ENCODE measurements at regions of chr4 and their contacts with region 1.

Region 1: GRCh38 chr4:154292589-154292988 is 199.0 kb downstream of the DCHS2 start:
- DNase-seq: no peak
- H3K4me3 ChIP-seq: no peak overlapping the region
- H3K27ac ChIP-seq: no peak overlapping the region
- H3K4me1 ChIP-seq: no peaks in the 10 kb centered on the region
- H3K27me3 ChIP-seq: peaks cover 4% of the 10 kb centered on the region
- CTCF ChIP-seq: peak in 1 of 2 donors; percentile 2

Region 2: GRCh38 chr4:153809307-153809706 is 483.3 kb before region 1 on chr4:
- CTCF ChIA-PET with region 1: no interaction called
- dilution Hi-C with region 1: no loop called
- in situ Hi-C with region 1: no loop called
- intact Hi-C with region 1: no loop called
- DNase-seq: no peak
- H3K4me3 ChIP-seq: no peak overlapping the region
- H3K27ac ChIP-seq: no peak overlapping the region
- H3K4me1 ChIP-seq: no peaks in the 10 kb centered on the region
- H3K27me3 ChIP-seq: no peaks in the 10 kb centered on the region
- CTCF ChIP-seq: no peak

Region 3: DNA sequence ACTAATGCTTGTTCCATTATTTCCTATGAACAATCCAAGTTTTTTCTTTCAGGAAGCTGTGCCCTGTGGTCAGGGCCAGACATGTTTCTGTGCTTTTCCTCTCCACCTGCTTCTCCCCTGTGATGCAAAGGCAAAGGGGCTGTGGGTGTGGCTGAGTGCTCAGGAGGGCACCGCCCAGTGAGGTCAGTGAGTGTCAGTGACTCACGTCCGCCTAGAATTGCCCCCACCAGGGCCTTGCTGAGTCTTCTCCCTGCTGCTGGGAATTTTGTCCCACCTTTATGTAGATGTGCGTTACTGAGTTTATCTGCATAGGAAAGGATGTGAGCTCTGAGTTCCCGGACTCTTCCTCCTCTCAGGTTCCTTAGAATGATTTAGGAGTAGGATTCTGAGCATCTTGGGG is 84.2 kb before region 1 on chr4:
- CTCF ChIA-PET with region 1: no interaction called
- dilution Hi-C with region 1: loop called (anchors 5 kb)
- in situ Hi-C with region 1: no loop called
- intact Hi-C with region 1: no loop called
- DNase-seq: peak; percentile 48
- H3K4me3 ChIP-seq: no peak overlapping the region
- H3K27ac ChIP-seq: no peak overlapping the region
- H3K4me1 ChIP-seq: no peaks in the 10 kb centered on the region
- H3K27me3 ChIP-seq: no peaks in the 10 kb centered on the region
- CTCF ChIP-seq: no peak